ENCODE measurements at regions of chr9 and their contacts with region 1.

Region 1: DNA sequence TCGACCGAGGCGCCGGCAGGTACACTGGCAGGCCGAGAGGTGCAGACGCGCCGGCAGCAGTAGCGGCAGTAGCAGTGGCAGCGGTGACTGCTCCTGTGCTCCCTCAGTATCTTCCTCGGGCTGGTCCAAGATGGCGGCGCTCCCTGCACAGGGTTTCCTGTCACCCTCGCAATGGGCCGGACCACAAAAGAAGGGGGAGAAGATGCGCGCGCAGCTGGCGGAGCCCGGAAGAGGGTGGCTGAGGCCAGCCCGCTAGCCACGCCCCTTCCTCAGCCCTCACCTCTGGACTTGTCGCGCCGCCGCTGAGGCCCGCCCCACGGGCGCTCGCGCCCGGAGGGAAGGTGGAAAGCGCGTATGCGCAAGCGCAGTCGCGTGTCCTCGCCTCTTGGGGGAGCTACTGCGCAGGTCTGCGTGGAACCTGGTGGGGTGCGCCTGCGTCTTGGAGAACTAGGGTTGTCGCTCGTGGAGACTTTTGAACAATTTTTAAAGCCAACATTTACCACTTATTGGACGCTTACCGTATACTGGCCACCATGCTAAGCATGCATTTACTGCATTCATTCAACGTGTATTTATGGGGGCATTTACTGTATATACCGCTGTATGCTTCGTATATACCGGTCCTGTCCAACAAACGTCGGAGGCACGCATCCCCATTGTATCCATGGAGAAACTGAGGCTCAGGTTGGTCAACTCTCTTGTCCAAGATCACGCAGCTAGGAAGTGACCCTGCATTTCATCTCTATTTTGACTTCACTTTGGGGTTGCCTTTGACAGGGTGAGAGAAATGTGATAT is at the start of gene RAB14:
- DNase-seq: peak; percentile 100
- ATAC-seq: peak; percentile 89
- H3K4me3 ChIP-seq: peak within 1 kb of the TSS; percentile 75
- H3K4me3 Mint-ChIP-seq: peak within 1 kb of the TSS; percentile 96
- H3K27ac ChIP-seq: peak within 1 kb of the TSS; percentile 76 to 87
- H3K27ac Mint-ChIP-seq: peak within 1 kb of the TSS; percentile 91
- H3K4me1 ChIP-seq: peaks cover 11% of the 10 kb centered on the region
- H3K4me1 Mint-ChIP-seq: peaks cover 49% of the 10 kb centered on the region
- H3K27me3 ChIP-seq: no peaks in the 10 kb centered on the region
- H3K27me3 Mint-ChIP-seq: no peaks in the 10 kb centered on the region
- CTCF ChIP-seq: peak; percentile 62
- total RNA-seq, gene RAB14: 57.4 to 58.2 TPM

Region 2: DNA sequence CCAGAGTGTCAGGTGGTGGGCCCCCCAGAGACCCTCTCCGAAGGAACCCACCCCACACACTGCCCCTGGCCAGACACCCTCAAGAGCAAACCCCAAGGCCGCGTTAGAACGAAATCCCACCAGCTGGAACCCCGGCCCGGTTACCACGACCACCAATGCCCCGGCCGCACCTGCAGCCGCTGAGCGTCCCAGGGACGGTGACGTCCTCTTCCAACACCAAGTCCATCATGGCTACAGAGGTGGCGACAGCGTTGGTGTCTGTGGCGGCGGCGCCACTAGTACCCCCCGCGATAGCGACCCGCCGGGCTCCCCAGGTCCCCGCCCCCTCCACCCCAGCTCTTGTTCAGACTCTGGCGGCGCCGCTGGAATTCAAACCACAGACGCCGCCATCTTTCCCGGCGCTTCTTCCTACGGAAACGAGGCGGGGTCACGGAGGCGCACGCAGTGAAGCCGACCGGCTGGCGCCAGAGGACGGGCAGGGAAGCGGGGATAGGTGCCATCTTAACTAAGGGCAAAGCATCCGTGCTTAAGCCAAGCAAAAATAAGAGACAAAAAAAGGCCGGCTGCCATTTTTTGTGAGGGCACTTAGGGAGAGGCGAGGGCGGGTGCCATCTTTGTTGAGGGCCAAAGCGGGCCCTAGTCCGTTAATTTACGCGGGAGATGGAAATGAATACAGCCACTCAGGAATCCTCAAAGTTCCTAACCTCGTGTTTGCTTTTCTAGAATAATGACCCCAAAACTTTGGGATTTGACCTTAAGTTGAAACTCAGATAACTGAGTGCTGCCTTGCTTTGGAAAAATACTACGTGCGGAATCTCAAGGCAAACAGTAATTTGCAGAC is 622.0 kb before region 1 on chr9 and contains the start of gene CDK5RAP2:
- CTCF ChIA-PET with region 1: no interaction called
- POLR2A ChIA-PET with region 1: no interaction called
- intact Hi-C with region 1: loop called in 1 of 2 experiments (anchors 5 kb)
- DNase-seq: peak; percentile 84 to 98 (median 90)
- ATAC-seq: peak; percentile 98
- H3K4me3 ChIP-seq: peak within 1 kb of the TSS; percentile 84
- H3K4me3 Mint-ChIP-seq: peak within 1 kb of the TSS; percentile 99
- H3K27ac ChIP-seq: peak within 1 kb of the TSS; percentile 26 to 55
- H3K27ac Mint-ChIP-seq: peak within 1 kb of the TSS; percentile 92
- H3K4me1 ChIP-seq: peaks cover 29% of the 10 kb centered on the region
- H3K4me1 Mint-ChIP-seq: peaks cover 48% of the 10 kb centered on the region
- H3K27me3 ChIP-seq: no peaks in the 10 kb centered on the region
- H3K27me3 Mint-ChIP-seq: no peaks in the 10 kb centered on the region
- CTCF ChIP-seq: no peak
- total RNA-seq, gene CDK5RAP2: 55.0 to 56.0 TPM

Region 3: GRCh38 chr9:120742951-120743416 is 459.0 kb before region 1 on chr9:
- CTCF ChIA-PET with region 1: no interaction called
- POLR2A ChIA-PET with region 1: no interaction called
- intact Hi-C with region 1: no loop called
- DNase-seq: peak in 3 of 14 experiments; percentile 40 to 54 (median 52)
- ATAC-seq: peak; percentile 68
- H3K4me3 ChIP-seq: no peak overlapping the region
- H3K4me3 Mint-ChIP-seq: no peak overlapping the region
- H3K27ac ChIP-seq: no peak overlapping the region
- H3K27ac Mint-ChIP-seq: no peak overlapping the region
- H3K4me1 ChIP-seq: no peaks in the 10 kb centered on the region
- H3K4me1 Mint-ChIP-seq: no peaks in the 10 kb centered on the region
- H3K27me3 ChIP-seq: no peaks in the 10 kb centered on the region
- H3K27me3 Mint-ChIP-seq: no peaks in the 10 kb centered on the region
- CTCF ChIP-seq: peak; percentile 68

Region 4: DNA sequence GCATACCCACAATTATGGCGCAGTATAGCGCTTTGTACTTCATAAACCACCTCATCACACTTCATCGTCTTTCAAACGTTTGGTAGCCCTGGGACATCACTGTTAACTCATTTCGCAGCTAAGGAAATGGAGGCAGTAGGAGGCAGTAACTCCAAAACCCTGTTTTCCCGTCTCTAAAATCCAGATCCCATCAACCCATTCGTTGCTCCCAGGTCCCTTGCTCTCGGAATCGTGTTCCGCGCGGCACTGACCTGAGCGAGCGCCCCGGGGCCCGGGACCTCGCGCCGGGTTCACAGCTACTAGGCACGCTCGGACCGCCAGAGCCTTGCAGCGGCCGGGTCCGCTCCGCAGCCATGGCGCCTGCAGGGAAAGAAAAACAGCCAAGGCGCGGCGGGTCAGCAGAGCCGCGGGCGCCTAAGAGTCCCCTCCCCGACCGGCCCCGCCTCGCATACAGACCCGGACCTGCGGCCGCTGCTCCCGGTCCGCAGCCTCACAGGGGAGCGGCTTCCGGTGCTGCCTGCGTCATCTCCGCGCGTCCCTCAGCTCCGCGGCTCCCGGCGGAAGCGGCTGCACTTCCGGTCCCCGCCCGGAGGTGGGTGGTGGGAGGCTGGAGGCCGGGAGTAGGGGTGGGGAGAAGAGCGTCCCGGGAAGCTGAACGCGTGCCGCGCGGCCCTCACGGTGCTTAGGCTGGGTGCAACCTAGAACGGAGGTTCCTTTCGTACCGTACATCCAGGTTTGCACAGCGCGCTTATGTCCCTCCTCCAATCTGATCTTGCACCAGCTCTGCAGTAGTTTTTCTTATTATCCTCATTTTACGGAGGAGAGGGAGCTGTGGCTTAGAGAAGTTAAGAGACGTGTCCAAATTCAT is 408.8 kb before region 1 on chr9 and contains the start of gene FBXW2:
- CTCF ChIA-PET with region 1: no interaction called
- POLR2A ChIA-PET with region 1: interaction called, 12 read pairs
- intact Hi-C with region 1: loop called in 1 of 2 experiments (anchors 5 kb)
- DNase-seq: peak; percentile 58 to 92 (median 78)
- ATAC-seq: peak; percentile 79
- H3K4me3 ChIP-seq: peak within 1 kb of the TSS; percentile 97
- H3K4me3 Mint-ChIP-seq: peak within 1 kb of the TSS; percentile 88
- H3K27ac ChIP-seq: peak within 1 kb of the TSS; percentile 81 to 82
- H3K27ac Mint-ChIP-seq: peak within 1 kb of the TSS; percentile 92
- H3K4me1 ChIP-seq: peaks cover 39% of the 10 kb centered on the region
- H3K4me1 Mint-ChIP-seq: peaks cover 63% of the 10 kb centered on the region
- H3K27me3 ChIP-seq: no peaks in the 10 kb centered on the region
- H3K27me3 Mint-ChIP-seq: no peaks in the 10 kb centered on the region
- CTCF ChIP-seq: no peak
- total RNA-seq, gene FBXW2: 58.7 to 64.7 TPM

Region 5: DNA sequence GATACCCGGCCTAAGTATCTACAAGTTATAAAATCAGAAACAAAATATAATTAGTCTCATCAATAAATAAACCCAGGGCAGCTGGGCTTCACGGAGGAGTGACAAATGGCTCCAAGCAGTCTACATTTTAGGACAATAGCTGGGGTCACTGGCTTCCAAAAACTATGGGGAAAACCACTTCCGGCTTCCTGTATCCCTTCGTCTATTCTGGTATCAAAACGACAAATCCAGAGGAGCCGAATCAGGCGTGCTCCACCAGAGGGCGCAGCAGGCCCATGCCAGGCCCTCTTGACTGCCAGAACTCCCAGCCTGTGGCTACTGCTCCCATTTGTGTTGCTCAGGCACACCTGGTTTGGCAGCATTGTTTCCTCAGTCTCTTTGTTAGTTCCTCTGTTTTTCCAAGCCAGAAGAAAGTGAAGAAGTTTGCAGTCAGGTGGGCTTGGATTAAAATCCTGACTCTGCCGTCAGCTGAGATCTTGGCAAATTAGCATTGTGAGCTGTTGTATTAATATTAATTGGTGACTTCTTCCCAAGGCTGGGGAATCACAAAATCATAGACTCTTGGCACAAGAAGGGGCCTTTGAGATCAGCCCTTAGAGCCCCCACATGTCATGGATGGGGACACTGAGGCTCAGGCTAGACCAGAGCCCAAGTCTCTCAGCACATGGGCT is 11.3 kb after region 1 on chr9:
- CTCF ChIA-PET with region 1: interaction called, 8 read pairs
- POLR2A ChIA-PET with region 1: interaction called, 13 read pairs
- intact Hi-C with region 1: no loop called
- DNase-seq: peak; percentile 31 to 80 (median 56)
- ATAC-seq: peak; percentile 70
- H3K4me3 ChIP-seq: no peak overlapping the region
- H3K4me3 Mint-ChIP-seq: no peak overlapping the region
- H3K27ac ChIP-seq: no peak overlapping the region
- H3K27ac Mint-ChIP-seq: no peak overlapping the region
- H3K4me1 ChIP-seq: peaks cover 5% of the 10 kb centered on the region
- H3K4me1 Mint-ChIP-seq: peaks cover 6% of the 10 kb centered on the region
- H3K27me3 ChIP-seq: no peaks in the 10 kb centered on the region
- H3K27me3 Mint-ChIP-seq: no peaks in the 10 kb centered on the region
- CTCF ChIP-seq: peak; percentile 80

Region 6: GRCh38 chr9:122099271-122099869 is 897.4 kb after region 1 on chr9:
- CTCF ChIA-PET with region 1: no interaction called
- POLR2A ChIA-PET with region 1: no interaction called
- intact Hi-C with region 1: loop called in 1 of 2 experiments (anchors 5 kb)
- DNase-seq: peak; percentile 69 to 89 (median 76)
- ATAC-seq: peak; percentile 82
- H3K4me3 ChIP-seq: no peak overlapping the region
- H3K4me3 Mint-ChIP-seq: peak overlapping the region; percentile 68
- H3K27ac ChIP-seq: no peak overlapping the region
- H3K27ac Mint-ChIP-seq: no peak overlapping the region
- H3K4me1 ChIP-seq: peaks cover 12% of the 10 kb centered on the region
- H3K4me1 Mint-ChIP-seq: peaks cover 16% of the 10 kb centered on the region
- H3K27me3 ChIP-seq: no peaks in the 10 kb centered on the region
- H3K27me3 Mint-ChIP-seq: peaks cover 4% of the 10 kb centered on the region
- CTCF ChIP-seq: peak; percentile 85